Ascending aorta (tissue), 2 donors: ENCODE measurements at regions of chr1 and their contacts with region 1.

Region 1: GRCh38 chr1:115138968-115139367 is 49.7 kb upstream of the TSPAN2 start:
- DNase-seq: peak; percentile 60 to 95
- H3K4me3 ChIP-seq: no peak overlapping the region
- H3K27ac ChIP-seq: peak overlapping the region; percentile 54 to 92
- H3K4me1 ChIP-seq: peaks cover 10 to 32% of the 10 kb centered on the region in 2 donors
- H3K27me3 ChIP-seq: no peaks in the 10 kb centered on the region
- CTCF ChIP-seq: peak; percentile 85 to 90 (median 89)

Region 2: DNA sequence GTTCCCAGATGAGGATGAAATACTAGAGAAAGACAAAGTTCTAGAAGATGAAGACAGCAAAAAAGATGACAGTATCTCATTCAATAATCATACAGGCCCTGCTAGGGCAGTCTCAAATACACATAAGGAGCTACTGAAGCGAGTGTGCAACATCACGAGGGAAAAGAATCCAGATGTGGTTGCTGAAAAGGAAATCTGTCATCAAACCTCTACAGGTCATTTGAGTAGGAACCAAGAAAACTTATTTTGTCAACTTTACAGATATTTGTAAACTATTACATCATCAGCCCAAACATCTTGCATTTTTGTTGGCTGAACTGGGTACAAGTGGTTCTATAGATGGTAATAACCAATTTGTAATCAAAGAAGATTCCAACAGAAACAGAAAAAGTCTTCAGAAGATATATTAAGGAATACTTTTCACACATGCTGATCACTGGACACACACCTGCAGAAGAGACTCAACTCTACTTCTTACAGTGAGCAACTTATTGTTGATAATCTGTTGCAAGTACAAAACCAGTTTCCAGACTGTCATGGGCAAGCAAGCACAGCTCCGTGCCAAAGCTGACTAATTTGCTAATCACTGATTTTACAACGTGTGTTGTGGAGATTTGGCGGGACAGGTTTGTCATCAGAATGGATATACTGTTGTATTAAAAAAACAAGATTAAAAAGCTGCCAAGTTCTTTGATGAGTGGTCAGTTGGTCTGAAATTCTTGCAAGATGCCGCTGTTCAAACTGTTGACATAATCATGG is 670.1 kb before region 1 on chr1:
- intact Hi-C with region 1: no loop called
- DNase-seq: no peak
- H3K4me3 ChIP-seq: no peak overlapping the region
- H3K27ac ChIP-seq: no peak overlapping the region
- H3K4me1 ChIP-seq: peaks cover 0 to 8% of the 10 kb centered on the region in 2 donors
- H3K27me3 ChIP-seq: no peaks in the 10 kb centered on the region
- CTCF ChIP-seq: no peak

Region 3: DNA sequence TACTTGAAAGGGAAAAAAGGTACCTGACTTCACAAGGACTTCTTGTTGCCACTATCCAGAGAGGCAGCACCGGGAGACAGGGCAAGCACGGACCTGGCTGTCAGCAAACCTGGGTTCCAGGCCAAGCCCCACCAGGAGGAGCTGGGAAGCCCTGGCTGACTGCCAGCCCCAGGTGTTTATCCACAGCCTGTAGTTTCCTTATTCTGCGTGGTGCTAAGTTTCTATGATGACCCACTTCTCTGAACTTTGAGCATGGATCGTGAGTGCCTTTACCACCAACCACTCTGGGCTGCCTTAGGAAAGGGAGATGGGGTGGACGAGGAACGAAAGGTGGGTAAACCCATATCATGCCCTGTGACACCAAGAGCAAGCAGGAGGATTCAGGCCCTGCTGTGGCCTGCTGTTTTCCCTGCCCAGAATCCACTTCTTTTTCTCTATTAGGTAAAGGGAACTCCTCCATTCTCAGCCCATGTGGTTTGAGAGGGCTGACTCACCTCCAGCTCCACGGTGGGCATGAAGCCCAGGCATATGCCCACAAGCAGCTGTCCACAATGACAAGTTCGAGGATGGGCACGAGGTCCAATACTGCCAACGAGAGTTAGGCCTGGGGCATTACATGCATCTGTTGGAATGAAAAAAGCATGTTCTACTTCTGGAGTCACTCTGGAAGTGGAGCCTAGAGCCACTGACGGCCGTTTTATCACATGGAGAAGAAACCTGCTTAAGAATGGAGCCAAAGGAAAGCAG is 70.0 kb before region 1 on chr1:
- intact Hi-C with region 1: loop called (anchors 5 kb)
- DNase-seq: peak; percentile 46 to 83
- H3K4me3 ChIP-seq: no peak overlapping the region
- H3K27ac ChIP-seq: peak overlapping the region; percentile 84 to 86
- H3K4me1 ChIP-seq: peaks cover 12 to 50% of the 10 kb centered on the region in 2 donors
- H3K27me3 ChIP-seq: no peaks in the 10 kb centered on the region
- CTCF ChIP-seq: peak in 1 of 3 experiments; percentile 23

Region 4: DNA sequence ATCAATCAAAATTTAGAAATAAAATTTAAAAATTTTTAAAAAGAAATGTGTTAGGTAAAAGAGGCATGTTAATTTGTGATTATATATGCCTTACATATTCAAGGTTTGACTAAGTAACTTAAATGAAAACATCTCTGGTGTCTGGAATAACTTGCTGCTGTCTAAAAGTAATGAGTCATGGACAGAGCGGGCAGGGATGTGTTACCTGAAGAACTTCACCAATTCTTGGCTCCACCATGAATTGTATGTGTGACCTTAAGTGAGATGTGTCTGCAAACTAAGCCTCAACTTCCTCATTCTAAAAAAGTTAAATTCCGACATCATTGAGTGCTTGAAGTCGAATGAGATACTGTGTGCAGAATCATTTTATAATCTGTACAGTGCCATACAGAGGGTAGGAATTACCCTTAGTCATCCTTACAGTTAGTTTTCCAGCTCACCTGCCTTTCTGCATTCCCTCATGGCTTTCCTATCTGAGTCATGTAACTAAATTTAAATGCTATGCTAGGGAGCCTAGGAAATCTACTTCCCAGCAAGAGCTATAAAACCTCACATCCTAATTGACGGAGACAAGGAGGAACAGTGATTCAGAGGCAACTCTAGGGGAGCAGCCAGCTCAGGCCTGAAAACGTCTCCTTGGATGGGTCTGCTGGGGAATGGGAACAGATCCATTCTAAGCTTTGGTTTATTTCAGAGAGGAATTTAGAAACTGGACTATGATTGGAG is 51.0 kb after region 1 on chr1:
- intact Hi-C with region 1: loop called (anchors 1 kb)
- DNase-seq: peak in 1 of 2 donors; percentile 71
- H3K4me3 ChIP-seq: no peak overlapping the region
- H3K27ac ChIP-seq: peak overlapping the region; percentile 89 to 95
- H3K4me1 ChIP-seq: peaks cover 15 to 34% of the 10 kb centered on the region in 2 donors
- H3K27me3 ChIP-seq: no peaks in the 10 kb centered on the region
- CTCF ChIP-seq: no peak

Region 5: DNA sequence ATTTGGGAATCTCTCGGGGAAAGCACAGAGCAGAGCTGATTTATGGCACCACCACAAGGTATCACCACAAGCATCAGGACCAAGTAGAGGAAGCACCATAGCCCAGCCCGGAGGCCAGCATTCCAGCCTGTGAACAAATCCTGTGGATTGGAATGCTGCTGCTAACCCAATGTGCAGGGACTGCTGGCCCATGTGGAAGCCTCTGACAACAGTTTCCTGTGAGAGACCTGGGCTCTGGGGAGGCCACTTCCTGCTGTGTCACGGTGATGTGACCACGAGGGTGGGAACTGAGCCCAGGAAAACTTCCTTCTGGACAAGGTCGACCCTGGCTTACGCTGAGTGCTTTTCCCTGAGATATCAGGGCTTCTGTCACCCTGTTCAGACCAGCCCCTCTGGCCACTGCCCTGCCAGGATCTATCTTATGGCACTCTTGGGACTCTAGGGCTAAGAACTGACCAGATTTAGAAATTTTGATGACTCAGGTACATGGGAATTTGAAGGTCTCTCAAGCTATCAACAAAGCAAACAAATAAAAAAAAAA is 287.3 kb after region 1 on chr1:
- intact Hi-C with region 1: loop called (anchors 2 kb)
- DNase-seq: peak; percentile 38 to 91
- H3K4me3 ChIP-seq: no peak overlapping the region
- H3K27ac ChIP-seq: peak overlapping the region; percentile 77 to 79
- H3K4me1 ChIP-seq: peaks cover 0 to 13% of the 10 kb centered on the region in 2 donors
- H3K27me3 ChIP-seq: no peaks in the 10 kb centered on the region
- CTCF ChIP-seq: no peak

Region 6: GRCh38 chr1:115595279-115596079 is 456.5 kb after region 1 on chr1:
- intact Hi-C with region 1: loop called (anchors 1 kb)
- DNase-seq: peak; percentile 12 to 92
- H3K4me3 ChIP-seq: no peak overlapping the region
- H3K27ac ChIP-seq: no peak overlapping the region
- H3K4me1 ChIP-seq: peaks cover 0 to 2% of the 10 kb centered on the region in 2 donors
- H3K27me3 ChIP-seq: no peaks in the 10 kb centered on the region
- CTCF ChIP-seq: peak; percentile 87 to 92 (median 87)

Region 7: GRCh38 chr1:116504308-116505156 is 1365.6 kb after region 1 on chr1:
- intact Hi-C with region 1: loop called (anchors 10 kb)
- DNase-seq: peak; percentile 75 to 85
- H3K4me3 ChIP-seq: no peak overlapping the region
- H3K27ac ChIP-seq: peak overlapping the region; percentile 29 to 43
- H3K4me1 ChIP-seq: peaks cover 6 to 11% of the 10 kb centered on the region in 2 donors
- H3K27me3 ChIP-seq: no peaks in the 10 kb centered on the region
- CTCF ChIP-seq: no peak